K562 (cell line): ENCODE measurements at regions of chr22 and their contacts with region 1.

Region 1: GRCh38 chr22:21816787-21817496 is 50.5 kb downstream of the MAPK1 start:
- DNase-seq: peak; percentile 72 to 87 (median 80)
- ATAC-seq: peak; percentile 69
- H3K4me3 ChIP-seq: no peak overlapping the region
- H3K27ac ChIP-seq: peak overlapping the region; percentile 57
- H3K4me1 ChIP-seq: peaks cover 27 to 33% of the 10 kb centered on the region in 2 experiments
- H3K27me3 ChIP-seq: no peaks in the 10 kb centered on the region
- CTCF ChIP-seq: no peak
- EP300 ChIP-seq: no peak
- POLR2A ChIP-seq: no peak
- RAD21 ChIP-seq: no peak

Region 2: DNA sequence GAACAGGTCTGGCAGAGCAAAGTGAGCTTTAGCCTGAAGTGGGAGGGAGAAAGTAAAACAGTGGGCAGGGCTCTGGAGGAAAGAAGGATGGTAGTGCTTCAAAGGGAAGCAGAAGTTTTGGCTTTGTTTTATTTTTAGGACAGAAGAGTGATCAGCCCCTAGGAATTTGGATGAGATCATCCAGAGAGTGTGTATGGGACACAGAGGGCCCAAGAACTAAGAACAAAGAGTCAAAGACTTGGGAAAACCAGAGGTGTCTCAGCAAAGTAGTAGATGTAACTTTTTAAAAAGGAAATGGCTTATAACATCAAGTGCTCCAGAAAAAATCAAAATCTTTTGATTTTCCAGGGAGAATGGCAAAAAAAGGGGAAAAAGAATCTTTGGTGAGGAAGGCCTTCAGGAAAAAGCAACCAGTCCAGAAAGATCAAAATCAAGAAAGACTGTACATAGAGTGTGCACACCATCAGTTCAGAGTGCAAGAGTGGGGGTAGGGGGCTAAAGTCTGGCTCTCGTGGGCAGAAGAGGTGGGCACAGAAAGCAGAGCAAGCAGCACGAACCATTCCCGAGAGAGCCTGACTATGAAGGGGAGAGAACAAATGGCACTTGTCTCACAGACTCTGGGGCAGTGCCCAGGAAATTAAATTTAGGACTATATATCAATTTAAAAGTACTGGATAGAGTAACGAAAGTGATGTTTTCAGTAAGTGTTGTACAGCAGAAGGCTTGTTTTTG is 20.5 kb after region 1 on chr22:
- CTCF ChIA-PET with region 1: no interaction called
- POLR2A ChIA-PET with region 1: interaction called, 13 read pairs
- in situ Hi-C with region 1: no loop called
- intact Hi-C with region 1: no loop called
- DNase-seq: peak in 1 of 4 experiments; percentile 73
- ATAC-seq: peak; percentile 16
- H3K4me3 ChIP-seq: no peak overlapping the region
- H3K27ac ChIP-seq: no peak overlapping the region
- H3K4me1 ChIP-seq: peaks cover 21% of the 10 kb centered on the region in 2 experiments
- H3K27me3 ChIP-seq: no peaks in the 10 kb centered on the region
- CTCF ChIP-seq: no peak
- EP300 ChIP-seq: no peak
- POLR2A ChIP-seq: no peak
- RAD21 ChIP-seq: no peak